B cell (primary cell): ENCODE measurements at regions of chr9 and their contacts with region 1.

Region 1: GRCh38 chr9:137277329-137278041 is at the start of gene TOR4A:
- DNase-seq: peak; percentile 75
- ATAC-seq: peak; percentile 77
- H3K4me3 ChIP-seq: peak within 1 kb of the TSS; percentile 12 to 88 (median 82)
- H3K4me3 Mint-ChIP-seq: peak within 1 kb of the TSS; percentile 90
- H3K27ac ChIP-seq: peak within 1 kb of the TSS; percentile 76 to 79
- H3K27ac Mint-ChIP-seq: peak within 1 kb of the TSS; percentile 93
- H3K4me1 ChIP-seq: peaks cover 32 to 59% of the 10 kb centered on the region in 2 donors
- H3K4me1 Mint-ChIP-seq: peaks cover 44% of the 10 kb centered on the region
- H3K27me3 ChIP-seq: no peaks in the 10 kb centered on the region
- H3K27me3 Mint-ChIP-seq: no peaks in the 10 kb centered on the region
- CTCF ChIP-seq: no peak
- total RNA-seq, gene TOR4A: 12.7 and 15.3 TPM in 2 replicates

Region 2: GRCh38 chr9:137182836-137183235 is 94.6 kb before region 1 on chr9:
- CTCF ChIA-PET with region 1: no interaction called
- POLR2A ChIA-PET with region 1: no interaction called
- intact Hi-C with region 1: no loop called
- DNase-seq: no peak
- ATAC-seq: no peak
- H3K4me3 ChIP-seq: no peak overlapping the region
- H3K4me3 Mint-ChIP-seq: no peak overlapping the region
- H3K27ac ChIP-seq: no peak overlapping the region
- H3K27ac Mint-ChIP-seq: no peak overlapping the region
- H3K4me1 ChIP-seq: peaks cover 16 to 19% of the 10 kb centered on the region in 2 donors
- H3K4me1 Mint-ChIP-seq: peaks cover 17% of the 10 kb centered on the region
- H3K27me3 ChIP-seq: no peaks in the 10 kb centered on the region
- H3K27me3 Mint-ChIP-seq: no peaks in the 10 kb centered on the region
- CTCF ChIP-seq: no peak

Region 3: DNA sequence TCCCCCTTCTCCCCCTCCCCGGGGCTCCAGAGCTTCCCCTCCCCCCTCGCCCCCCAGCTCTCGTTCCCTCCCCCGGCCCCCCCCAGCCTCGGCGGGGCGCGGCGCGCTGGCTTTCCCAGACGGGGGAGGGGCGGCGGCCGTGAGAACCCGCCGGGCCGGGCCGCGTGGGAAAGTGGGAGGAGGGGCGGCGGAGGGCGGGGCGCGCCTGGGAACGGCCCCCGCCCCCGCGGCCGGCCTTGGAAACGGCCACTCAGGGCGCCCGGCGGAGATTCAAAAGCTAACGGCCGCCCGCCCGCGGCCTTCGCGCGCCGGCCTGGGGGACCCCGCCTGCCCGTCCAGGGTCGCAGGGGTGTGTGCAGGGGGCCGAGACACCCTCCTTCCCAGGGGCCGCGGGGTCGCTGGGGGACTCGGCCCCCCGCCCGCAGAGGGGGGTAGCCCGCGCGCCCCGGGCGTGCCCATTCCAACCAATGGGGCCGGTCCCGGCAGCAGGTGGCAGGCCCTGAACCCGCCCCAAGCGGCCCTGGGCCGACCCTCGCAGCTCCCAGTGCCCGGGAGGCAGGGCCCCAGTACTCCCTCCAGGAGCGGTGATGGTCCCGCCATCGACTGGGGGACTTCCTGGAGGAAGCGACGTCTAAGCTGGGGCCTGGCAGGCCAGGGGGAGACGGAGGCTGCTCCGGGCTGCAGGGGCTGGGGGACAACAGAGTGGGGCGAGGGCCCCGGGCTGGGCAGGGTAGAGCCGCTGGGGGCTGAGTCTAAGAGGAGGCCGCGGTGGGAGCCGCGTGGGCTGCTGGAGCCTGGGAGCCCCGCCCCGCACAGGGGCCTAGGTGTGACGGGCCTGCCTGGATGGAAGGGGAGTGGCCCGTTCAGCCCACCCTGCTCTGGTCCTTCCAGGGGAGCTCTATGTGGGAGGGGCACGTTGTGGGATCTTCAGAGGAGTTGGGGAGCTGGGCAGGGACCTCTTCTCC is 38.8 kb after region 1 on chr9:
- CTCF ChIA-PET with region 1: no interaction called
- POLR2A ChIA-PET with region 1: no interaction called
- intact Hi-C with region 1: loop called (anchors 1 kb)
- DNase-seq: peak; percentile 46
- ATAC-seq: peak; percentile 19
- H3K4me3 ChIP-seq: peak overlapping the region in 2 of 5 experiments; percentile 39 to 42
- H3K4me3 Mint-ChIP-seq: peak overlapping the region; percentile 29
- H3K27ac ChIP-seq: no peak overlapping the region
- H3K27ac Mint-ChIP-seq: no peak overlapping the region
- H3K4me1 ChIP-seq: peaks cover 21 to 30% of the 10 kb centered on the region in 2 donors
- H3K4me1 Mint-ChIP-seq: peaks cover 10% of the 10 kb centered on the region
- H3K27me3 ChIP-seq: peaks cover 0 to 11% (median 4%) of the 10 kb centered on the region in 4 experiments
- H3K27me3 Mint-ChIP-seq: no peaks in the 10 kb centered on the region
- CTCF ChIP-seq: no peak